ENCODE measurements at regions of chr13 and their contacts with region 1.

Region 1: DNA sequence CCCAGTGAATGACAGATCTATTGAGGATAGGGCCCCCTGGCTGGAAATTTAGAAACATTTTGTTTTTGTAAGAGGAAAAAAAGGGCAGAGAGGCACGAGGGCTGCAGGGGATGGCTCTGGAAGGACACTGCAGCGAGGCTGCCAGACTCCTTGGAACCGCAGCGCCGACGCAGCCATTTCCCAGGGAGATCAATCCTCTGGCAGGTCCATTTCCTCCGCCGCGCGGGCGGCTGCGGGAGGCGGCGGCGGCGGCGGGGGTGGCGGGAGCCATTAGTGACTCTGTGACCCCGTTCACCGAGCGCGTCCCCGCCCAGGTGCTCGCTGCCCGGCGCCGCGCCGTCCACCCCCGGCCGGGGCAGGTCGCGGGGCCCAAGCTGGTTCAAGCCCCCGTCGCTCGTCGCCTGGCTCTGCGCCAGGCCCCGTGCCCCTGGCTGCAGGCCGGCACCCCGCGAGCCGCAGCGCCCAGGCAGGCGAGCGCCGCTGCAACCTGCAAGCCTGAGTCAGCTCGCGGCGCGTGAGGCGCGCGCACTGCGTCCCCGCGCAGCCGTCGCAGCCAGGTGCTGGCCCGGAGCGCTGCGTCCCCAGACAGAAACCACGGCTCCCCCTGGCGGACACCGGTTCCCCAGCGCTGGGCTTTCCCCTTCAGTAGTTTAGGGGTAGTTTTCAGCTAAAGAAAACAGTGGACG is 192.6 kb downstream of the KATNAL1 start:
- DNase-seq: peak; percentile 72
- ATAC-seq: peak; percentile 93
- H3K4me3 ChIP-seq: peak overlapping the region; percentile 44 to 54
- H3K27ac ChIP-seq: peak overlapping the region; percentile 59; the same call in 1 of the 2 replicates
- H3K4me1 ChIP-seq: peaks cover 12 to 25% of the 10 kb centered on the region in 2 experiments
- H3K27me3 ChIP-seq: no peaks in the 10 kb centered on the region; the same call in 1 of the 2 replicates
- CTCF ChIP-seq: peak; percentile 87 to 94 (median 91)
- POLR2A ChIP-seq: peak; percentile 75
- RAD21 ChIP-seq: peak; percentile 85

Region 2: GRCh38 chr13:29508130-29508875 is 606.4 kb before region 1 on chr13:
- CTCF ChIA-PET with region 1: interaction called, 7 read pairs
- POLR2A ChIA-PET with region 1: no interaction called
- RAD21 ChIA-PET with region 1: no interaction called
- intact Hi-C with region 1: loop called (anchors 2 kb)
- DNase-seq: peak; percentile 24
- ATAC-seq: peak; percentile 92
- H3K4me3 ChIP-seq: no peak overlapping the region
- H3K27ac ChIP-seq: no peak overlapping the region
- H3K4me1 ChIP-seq: no peaks in the 10 kb centered on the region
- H3K27me3 ChIP-seq: no peaks in the 10 kb centered on the region
- CTCF ChIP-seq: peak; percentile 45 to 98 (median 97); a peak in 5 of 6 replicates
- POLR2A ChIP-seq: no peak
- RAD21 ChIP-seq: peak; percentile 82

Region 3: GRCh38 chr13:29771247-29771646 is 343.5 kb before region 1 on chr13:
- CTCF ChIA-PET with region 1: interaction called, 226 read pairs
- POLR2A ChIA-PET with region 1: interaction called, 3 read pairs
- RAD21 ChIA-PET with region 1: interaction called, 14 to 15 read pairs
- intact Hi-C with region 1: loop called (anchors 1 kb)
- DNase-seq: peak; percentile 37
- ATAC-seq: 0 out of 2 replicates have a peak, but pooled peaks have one; percentile 59
- H3K4me3 ChIP-seq: no peak overlapping the region
- H3K27ac ChIP-seq: no peak overlapping the region
- H3K4me1 ChIP-seq: no peaks in the 10 kb centered on the region
- H3K27me3 ChIP-seq: no peaks in the 10 kb centered on the region
- CTCF ChIP-seq: peak; percentile 36 to 63 (median 56); a peak in 4 of 6 replicates
- POLR2A ChIP-seq: no peak
- RAD21 ChIP-seq: peak; percentile 69

Region 4: DNA sequence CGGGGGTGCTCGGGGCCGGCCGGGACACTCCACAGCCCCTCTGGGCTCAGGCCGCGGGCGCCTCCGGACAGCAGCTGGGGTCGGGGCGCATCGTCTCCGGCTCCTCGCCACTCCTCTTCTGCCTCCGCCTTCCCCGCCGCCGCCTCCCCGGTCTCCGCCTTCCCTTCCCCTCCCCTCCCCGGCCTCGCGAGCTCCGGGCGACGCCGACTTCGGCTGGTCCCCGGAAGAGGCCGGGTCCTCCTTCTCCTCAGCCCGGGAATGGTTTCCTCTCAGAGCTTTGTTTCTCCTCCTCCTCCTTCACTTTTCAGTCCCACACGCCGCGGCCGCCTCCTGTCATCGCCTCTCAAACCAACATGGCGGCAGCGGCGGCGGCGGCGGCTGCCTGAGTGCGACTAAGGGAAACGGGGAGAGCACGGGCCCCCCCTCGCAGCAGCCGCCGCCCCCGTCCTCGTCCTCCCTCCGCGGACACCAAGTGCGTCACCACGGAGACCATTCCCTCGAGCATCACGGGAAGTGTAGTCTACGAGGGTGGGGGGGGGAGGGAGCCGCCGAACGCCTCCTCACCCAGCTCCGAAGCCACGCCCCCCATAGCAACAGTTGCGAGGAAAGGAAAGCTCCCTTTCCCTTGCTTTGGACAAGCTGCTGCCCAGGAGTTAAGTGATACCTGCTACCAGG is 264.4 kb before region 1 on chr13 and contains the start of gene UBL3:
- CTCF ChIA-PET with region 1: interaction called, 5 read pairs
- POLR2A ChIA-PET with region 1: no interaction called
- RAD21 ChIA-PET with region 1: interaction called in 1 of 2 experiments, 5 read pairs
- intact Hi-C with region 1: loop called (anchors 2 kb)
- DNase-seq: peak; percentile 85
- ATAC-seq: peak; percentile 88
- H3K4me3 ChIP-seq: peak within 1 kb of the TSS; percentile 69 to 74
- H3K27ac ChIP-seq: peak within 1 kb of the TSS; percentile 82
- H3K4me1 ChIP-seq: peaks cover 0 to 12% of the 10 kb centered on the region in 2 experiments; a peak in 3 of 4 replicates
- H3K27me3 ChIP-seq: no peaks in the 10 kb centered on the region
- CTCF ChIP-seq: no peak
- POLR2A ChIP-seq: peak; percentile 29
- RAD21 ChIP-seq: no peak
- total RNA-seq, gene UBL3: 10.7 TPM

Region 5: DNA sequence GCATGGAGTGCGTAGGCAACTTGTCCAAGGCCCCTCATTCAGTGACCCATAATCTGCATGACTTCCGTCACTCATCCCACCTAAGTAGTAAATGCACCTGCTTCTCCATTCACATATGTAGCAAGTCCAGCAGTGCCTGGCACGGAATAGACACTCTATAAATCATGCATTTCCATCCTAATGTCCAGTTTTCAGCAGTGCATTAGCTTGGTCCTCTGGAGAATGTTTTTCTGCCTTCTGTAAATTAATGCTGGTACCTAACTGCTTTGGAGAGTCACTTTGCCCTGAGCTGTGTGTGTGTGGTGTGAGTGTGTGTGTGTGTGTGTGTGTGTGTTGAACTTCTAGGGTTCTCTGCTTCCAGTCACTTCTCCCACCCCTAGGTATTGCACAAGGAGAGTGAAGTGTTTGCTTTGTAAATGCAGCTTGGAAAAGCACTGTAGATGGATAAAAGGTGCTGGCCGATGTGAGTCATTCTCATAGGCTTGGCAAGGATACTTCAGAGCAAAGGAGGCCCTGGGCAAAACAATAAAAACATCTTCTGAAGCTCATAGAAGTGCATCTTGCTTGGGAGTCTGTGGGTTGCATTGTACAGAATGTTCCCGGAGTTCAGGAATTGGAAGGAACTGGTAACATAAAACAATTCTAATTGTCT is 10.8 kb after region 1 on chr13:
- CTCF ChIA-PET with region 1: interaction called, 15 read pairs
- POLR2A ChIA-PET with region 1: no interaction called
- RAD21 ChIA-PET with region 1: interaction called in 1 of 2 experiments, 3 read pairs
- intact Hi-C with region 1: no loop called
- DNase-seq: no peak
- ATAC-seq: peak; percentile 77
- H3K4me3 ChIP-seq: no peak overlapping the region
- H3K27ac ChIP-seq: no peak overlapping the region
- H3K4me1 ChIP-seq: peaks cover 10 to 16% of the 10 kb centered on the region in 2 experiments
- H3K27me3 ChIP-seq: no peaks in the 10 kb centered on the region
- CTCF ChIP-seq: no peak
- POLR2A ChIP-seq: no peak
- RAD21 ChIP-seq: no peak

Region 6: DNA sequence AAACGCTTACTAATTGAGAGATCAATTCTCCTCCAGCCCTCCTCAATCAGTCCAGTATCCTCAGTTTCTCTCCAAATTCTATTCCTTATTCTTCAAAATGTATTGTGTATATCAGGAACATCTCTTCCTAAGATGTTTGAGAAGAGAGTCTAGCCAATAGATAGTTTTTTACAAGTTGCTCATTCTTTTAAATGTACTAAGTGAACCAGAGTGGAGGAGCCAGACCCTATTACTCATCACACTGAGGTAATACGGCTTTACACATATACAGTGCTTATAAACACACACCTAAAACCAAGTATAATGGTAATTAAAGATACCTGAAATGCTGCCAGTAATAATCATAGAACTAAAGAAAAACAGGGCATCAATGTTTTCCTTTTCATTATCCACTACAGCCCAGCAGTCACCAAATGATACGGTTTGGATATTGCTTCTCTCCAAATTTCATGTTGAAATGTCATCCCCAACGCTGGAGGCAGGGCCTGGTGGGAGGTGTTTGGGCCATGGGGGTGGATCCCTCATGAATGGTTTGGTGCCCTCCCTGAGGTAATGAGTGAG is 396.2 kb after region 1 on chr13:
- CTCF ChIA-PET with region 1: no interaction called
- POLR2A ChIA-PET with region 1: no interaction called
- RAD21 ChIA-PET with region 1: no interaction called
- intact Hi-C with region 1: no loop called
- DNase-seq: no peak
- ATAC-seq: no peak
- H3K4me3 ChIP-seq: no peak overlapping the region
- H3K27ac ChIP-seq: no peak overlapping the region
- H3K4me1 ChIP-seq: no peaks in the 10 kb centered on the region
- H3K27me3 ChIP-seq: no peaks in the 10 kb centered on the region
- CTCF ChIP-seq: no peak
- POLR2A ChIP-seq: no peak
- RAD21 ChIP-seq: no peak

Measured in HCT116 (cell line).